A549 (cell line): ENCODE measurements at regions of chr14 and their contacts with region 1.

Region 1: DNA sequence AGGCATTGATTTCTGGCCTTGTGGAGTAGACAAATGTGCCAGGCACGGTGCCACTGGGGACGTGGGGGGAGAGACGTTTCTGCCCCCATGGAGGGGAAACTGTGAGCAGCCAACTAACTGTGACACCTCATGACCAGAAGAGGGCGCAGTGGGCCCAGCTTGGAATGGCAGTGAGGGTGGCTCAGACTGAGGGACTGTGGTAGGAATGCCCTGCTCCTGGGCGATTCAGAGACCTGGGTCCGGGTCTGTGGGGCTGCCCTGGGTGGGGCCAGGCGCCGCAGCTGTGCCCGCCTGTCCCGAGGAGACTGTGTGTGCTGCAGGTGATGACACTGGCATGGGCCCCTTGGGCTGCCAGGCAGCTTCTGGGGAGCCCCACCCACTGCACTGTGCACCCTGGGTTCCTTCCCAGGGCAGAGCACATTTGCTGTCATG is 60.6 kb downstream of the SLC25A47 start:
- DNase-seq: peak; percentile 64 to 73
- ATAC-seq: peak; percentile 87 to 95
- H3K4me3 ChIP-seq: no peak overlapping the region
- H3K27ac ChIP-seq: peak overlapping the region; percentile 33 to 65; a peak in 2 of 6 replicates
- H3K4me1 ChIP-seq: peaks cover 38% of the 10 kb centered on the region
- CTCF ChIP-seq: peak; percentile 86
- EP300 ChIP-seq: no peak
- POLR2A ChIP-seq: no peak
- RAD21 ChIP-seq: peak; percentile 77 to 80

Region 2: GRCh38 chr14:100056964-100057795 is 326.6 kb before region 1 on chr14:
- CTCF ChIA-PET with region 1: no interaction called
- POLR2A ChIA-PET with region 1: no interaction called
- DNase-seq: peak; percentile 23 to 28
- ATAC-seq: peak; percentile 64 to 66; a peak in 4 of 6 replicates
- H3K4me3 ChIP-seq: no peak overlapping the region
- H3K27ac ChIP-seq: no peak overlapping the region
- H3K4me1 ChIP-seq: no peaks in the 10 kb centered on the region
- CTCF ChIP-seq: peak; percentile 11; the same call in 1 of the 3 replicates
- EP300 ChIP-seq: no peak
- POLR2A ChIP-seq: no peak
- RAD21 ChIP-seq: peak; percentile 25 to 39; a peak in 3 of 5 replicates

Region 3: GRCh38 chr14:100268591-100269207 is 115.0 kb before region 1 on chr14:
- CTCF ChIA-PET with region 1: no interaction called
- POLR2A ChIA-PET with region 1: no interaction called
- DNase-seq: no peak
- ATAC-seq: no peak
- H3K4me3 ChIP-seq: no peak overlapping the region
- H3K27ac ChIP-seq: no peak overlapping the region
- H3K4me1 ChIP-seq: 0 out of 3 replicates have a peak, but pooled peaks cover 5% of the 10 kb centered on the region
- CTCF ChIP-seq: no peak
- EP300 ChIP-seq: no peak
- POLR2A ChIP-seq: no peak
- RAD21 ChIP-seq: no peak

Region 4: DNA sequence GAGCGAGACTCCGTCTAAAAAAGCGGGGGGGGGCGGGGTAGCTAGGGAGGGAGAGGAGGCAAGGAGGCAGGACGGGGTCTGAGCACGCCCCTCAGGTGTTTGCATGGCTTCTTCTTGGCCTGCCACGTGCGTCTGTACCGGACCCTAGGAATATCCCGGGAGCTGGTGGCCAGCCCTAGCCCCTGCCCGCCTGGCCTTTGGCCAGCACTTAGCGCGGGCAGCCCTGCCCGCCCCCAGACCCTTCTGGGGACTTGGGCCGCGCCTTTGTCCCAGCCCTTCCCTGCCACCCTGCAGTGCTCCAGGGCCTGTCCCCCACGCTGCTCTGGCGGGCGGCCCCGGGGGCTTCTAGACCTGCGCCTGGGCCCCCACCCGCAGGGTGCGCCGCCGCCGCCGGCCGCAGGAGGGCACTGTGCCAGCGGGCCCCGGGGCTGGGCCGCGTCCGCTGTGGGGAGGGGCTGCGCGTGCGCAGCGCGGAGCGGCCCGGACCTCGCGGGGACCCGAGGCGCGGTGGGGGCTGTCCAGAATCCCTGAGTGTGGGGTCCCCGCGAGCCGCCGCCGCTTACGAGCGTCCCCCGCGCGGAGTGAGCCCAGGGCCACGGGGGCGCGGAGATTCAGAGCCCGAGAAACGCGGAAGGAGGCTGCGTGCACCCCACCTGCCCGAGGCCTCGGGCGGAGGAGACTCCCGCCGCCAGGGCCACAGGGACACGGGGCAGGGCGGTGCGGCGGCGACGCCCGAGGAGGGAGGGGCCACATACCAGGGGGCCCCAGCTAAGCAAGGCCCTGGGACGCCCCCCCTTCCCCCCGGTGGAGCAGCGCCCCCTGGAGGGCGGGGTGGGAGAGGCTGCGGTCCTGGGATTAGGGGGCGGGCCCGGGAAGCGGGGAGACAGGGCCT is 98.5 kb before region 1 on chr14:
- CTCF ChIA-PET with region 1: interaction called, 11 read pairs
- POLR2A ChIA-PET with region 1: no interaction called
- DNase-seq: peak; percentile 81
- ATAC-seq: peak; percentile 80 to 85
- H3K4me3 ChIP-seq: peak overlapping the region; percentile 67
- H3K27ac ChIP-seq: peak overlapping the region; percentile 96 to 100
- H3K4me1 ChIP-seq: peaks cover 9% of the 10 kb centered on the region; the same call in 2 of the 3 replicates
- CTCF ChIP-seq: peak; percentile 76
- EP300 ChIP-seq: no peak
- POLR2A ChIP-seq: peak; percentile 68
- RAD21 ChIP-seq: peak; percentile 10 to 41; a peak in 2 of 5 replicates

Region 5: DNA sequence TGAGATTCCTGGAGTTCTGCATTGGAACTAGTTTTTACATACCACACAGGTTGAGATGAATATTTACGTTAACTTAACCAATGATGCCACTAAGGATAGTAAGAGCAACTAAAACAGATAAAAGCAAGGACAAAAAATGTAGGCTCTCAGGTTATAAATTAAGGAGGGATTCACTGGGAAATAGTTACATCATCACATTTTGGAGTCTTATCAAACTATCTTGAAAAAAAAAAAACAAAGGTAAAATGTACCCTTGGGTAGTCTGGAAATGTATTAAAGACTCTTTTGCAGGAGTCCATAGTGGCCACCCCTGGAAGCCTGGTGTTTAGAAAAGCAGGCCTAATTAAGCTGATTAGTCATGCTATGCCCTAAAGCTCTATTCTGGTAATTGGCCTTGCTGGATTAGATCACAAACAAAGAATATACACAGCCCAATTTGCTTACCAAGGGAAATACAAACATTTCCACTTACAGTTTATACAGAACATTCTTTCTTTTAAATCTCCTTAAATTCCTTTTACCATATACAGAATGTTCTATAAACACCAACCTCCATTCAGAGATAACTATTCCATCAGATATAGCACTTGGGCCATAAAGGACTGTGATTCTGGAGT is 21.3 kb before region 1 on chr14:
- CTCF ChIA-PET with region 1: interaction called, 32 read pairs
- POLR2A ChIA-PET with region 1: no interaction called
- DNase-seq: no peak
- ATAC-seq: no peak
- H3K4me3 ChIP-seq: no peak overlapping the region
- H3K27ac ChIP-seq: no peak overlapping the region
- H3K4me1 ChIP-seq: no peaks in the 10 kb centered on the region
- CTCF ChIP-seq: no peak
- EP300 ChIP-seq: no peak
- POLR2A ChIP-seq: no peak
- RAD21 ChIP-seq: no peak

Region 6: GRCh38 chr14:100406505-100407131 is 22.9 kb after region 1 on chr14:
- CTCF ChIA-PET with region 1: interaction called, 80 read pairs
- POLR2A ChIA-PET with region 1: interaction called, 3 read pairs
- DNase-seq: peak in 1 of 2 experiments; percentile 66
- ATAC-seq: peak in 1 of 2 experiments; percentile 28; a peak in 2 of 6 replicates
- H3K4me3 ChIP-seq: no peak overlapping the region
- H3K27ac ChIP-seq: peak overlapping the region; percentile 82 to 88
- H3K4me1 ChIP-seq: peaks cover 55% of the 10 kb centered on the region
- CTCF ChIP-seq: no peak
- EP300 ChIP-seq: 0 out of 5 replicates have a peak, but pooled peaks of 1 of the 2 experiments have one; percentile 22
- POLR2A ChIP-seq: no peak
- RAD21 ChIP-seq: no peak

Region 7: GRCh38 chr14:100440187-100440631 is 56.5 kb after region 1 on chr14:
- CTCF ChIA-PET with region 1: interaction called, 109 read pairs
- POLR2A ChIA-PET with region 1: interaction called, 7 read pairs
- DNase-seq: peak; percentile 81 to 89
- ATAC-seq: peak; percentile 83 to 93
- H3K4me3 ChIP-seq: no peak overlapping the region
- H3K27ac ChIP-seq: peak overlapping the region; percentile 70 to 83
- H3K4me1 ChIP-seq: peaks cover 61% of the 10 kb centered on the region
- CTCF ChIP-seq: peak; percentile 90
- EP300 ChIP-seq: no peak
- POLR2A ChIP-seq: no peak
- RAD21 ChIP-seq: peak; percentile 97 to 98

Region 8: GRCh38 chr14:100628225-100628624 is 244.5 kb after region 1 on chr14:
- CTCF ChIA-PET with region 1: interaction called, 13 read pairs
- POLR2A ChIA-PET with region 1: no interaction called
- DNase-seq: no peak
- ATAC-seq: no peak
- H3K4me3 ChIP-seq: no peak overlapping the region
- H3K27ac ChIP-seq: no peak overlapping the region
- H3K4me1 ChIP-seq: no peaks in the 10 kb centered on the region
- CTCF ChIP-seq: no peak
- EP300 ChIP-seq: no peak
- POLR2A ChIP-seq: no peak
- RAD21 ChIP-seq: no peak

Region 9: DNA sequence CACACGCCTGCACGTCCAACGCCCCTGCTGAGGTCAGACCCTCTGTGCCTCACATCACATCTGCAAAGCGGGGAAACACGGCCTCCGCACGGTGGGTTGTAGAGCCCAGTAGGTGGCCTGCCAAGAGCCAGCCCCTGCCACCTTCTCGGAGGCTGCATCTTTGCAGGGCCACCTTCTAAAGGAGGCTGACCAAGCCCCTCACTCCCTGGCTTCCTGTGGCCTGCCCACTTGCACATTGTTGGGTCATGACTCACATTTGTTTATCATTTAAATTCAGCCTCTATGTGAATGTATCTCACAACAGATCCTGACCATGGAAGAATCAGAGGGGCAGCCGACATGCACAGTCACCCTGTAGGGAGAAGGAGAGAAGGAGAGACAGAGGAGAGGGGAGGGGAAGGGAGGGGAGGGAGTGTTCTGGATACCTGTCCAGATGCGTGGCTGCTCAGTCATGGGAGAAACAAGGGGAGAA is 858.1 kb after region 1 on chr14:
- CTCF ChIA-PET with region 1: no interaction called
- POLR2A ChIA-PET with region 1: no interaction called
- DNase-seq: no peak
- ATAC-seq: no peak
- H3K4me3 ChIP-seq: no peak overlapping the region
- H3K27ac ChIP-seq: no peak overlapping the region
- H3K4me1 ChIP-seq: no peaks in the 10 kb centered on the region; the same call in 2 of the 3 replicates
- CTCF ChIP-seq: no peak
- EP300 ChIP-seq: no peak
- POLR2A ChIP-seq: no peak
- RAD21 ChIP-seq: no peak

Region 10: GRCh38 chr14:101665515-101666078 is 1281.9 kb after region 1 on chr14:
- CTCF ChIA-PET with region 1: interaction called, 34 read pairs
- POLR2A ChIA-PET with region 1: no interaction called
- DNase-seq: peak; percentile 71 to 80
- ATAC-seq: peak; percentile 97
- H3K4me3 ChIP-seq: no peak overlapping the region
- H3K27ac ChIP-seq: no peak overlapping the region
- H3K4me1 ChIP-seq: no peaks in the 10 kb centered on the region
- CTCF ChIP-seq: peak; percentile 88
- EP300 ChIP-seq: no peak
- POLR2A ChIP-seq: no peak
- RAD21 ChIP-seq: peak; percentile 95 to 98